ENCODE measurements at regions of chr1 and their contacts with region 1.

Region 1: DNA sequence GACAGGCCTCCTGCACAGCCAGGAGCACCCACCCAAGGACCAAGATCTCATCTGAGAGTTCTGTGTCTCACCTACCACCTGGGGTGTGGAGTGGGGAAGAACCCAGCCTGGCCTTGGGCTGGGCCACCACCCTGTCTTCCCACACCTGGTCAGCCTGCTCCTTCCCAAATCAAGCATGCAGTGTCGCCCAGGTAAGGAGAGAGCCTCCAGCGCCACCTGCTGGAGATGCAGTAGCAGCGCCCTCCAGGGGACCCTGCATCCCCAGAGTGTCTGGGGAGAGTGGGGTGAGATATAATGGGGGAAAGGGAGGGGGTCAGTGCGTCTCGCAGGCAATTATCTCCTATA is 32.3 kb downstream of the KIAA2013 start:
- DNase-seq: no peak
- ATAC-seq: peak; percentile 98
- H3K4me3 ChIP-seq: no peak overlapping the region
- H3K27ac ChIP-seq: no peak overlapping the region
- H3K4me1 ChIP-seq: no peaks in the 10 kb centered on the region
- H3K27me3 ChIP-seq: peaks cover 0 to 2% of the 10 kb centered on the region in 2 experiments; a peak in 2 of 4 replicates
- CTCF ChIP-seq: peak; percentile 95 to 99 (median 98)
- EP300 ChIP-seq: no peak
- POLR2A ChIP-seq: no peak
- RAD21 ChIP-seq: peak; percentile 91

Region 2: DNA sequence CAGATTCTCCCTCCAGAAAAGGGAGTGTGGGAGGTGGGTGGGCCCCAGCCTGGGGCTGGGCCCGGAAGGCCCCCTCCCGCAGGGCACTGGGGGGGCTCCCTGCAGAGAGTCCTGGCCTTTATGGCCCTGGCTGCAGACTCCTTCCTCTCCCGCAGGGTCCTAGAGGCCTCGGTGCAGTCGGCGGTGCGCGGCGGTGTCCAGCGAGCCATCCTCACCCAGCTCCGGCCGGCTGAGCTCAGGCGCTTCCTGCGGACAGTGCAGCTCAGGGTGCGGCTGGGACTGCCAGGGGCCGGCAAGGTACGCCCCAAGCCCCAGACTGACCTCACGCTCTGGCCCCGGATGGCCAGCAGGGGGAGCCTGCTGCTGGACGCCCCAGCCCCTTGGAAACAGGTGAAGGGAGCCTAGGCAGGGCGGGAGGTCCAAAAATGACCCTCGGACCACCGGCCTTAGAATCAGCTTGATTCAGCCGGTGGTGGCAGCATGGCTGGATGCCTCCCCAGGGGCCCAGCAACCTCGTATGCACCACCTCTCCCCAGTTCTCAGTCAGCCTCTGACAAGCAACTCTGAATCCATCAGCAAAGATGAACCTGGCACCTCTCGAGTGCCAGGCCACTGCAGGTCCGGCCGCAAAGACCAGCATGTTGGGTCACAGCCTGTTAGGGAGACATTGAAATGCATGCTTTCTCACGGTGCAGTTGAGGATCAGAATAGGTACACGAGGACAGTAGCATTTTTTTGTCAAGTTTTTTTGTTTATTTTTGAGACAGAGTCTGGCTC is 108.7 kb before region 1 on chr1:
- CTCF ChIA-PET with region 1: interaction called, 7 read pairs
- POLR2A ChIA-PET with region 1: no interaction called
- RAD21 ChIA-PET with region 1: interaction called, 3 read pairs
- SMC1A ChIA-PET with region 1: no interaction called
- in situ Hi-C with region 1: no loop called
- intact Hi-C with region 1: loop called (anchors 5 kb)
- DNase-seq: no peak
- ATAC-seq: peak; percentile 94
- H3K4me3 ChIP-seq: no peak overlapping the region
- H3K27ac ChIP-seq: no peak overlapping the region
- H3K4me1 ChIP-seq: peaks cover 4% of the 10 kb centered on the region; the same call in 1 of the 2 replicates
- H3K27me3 ChIP-seq: no peaks in the 10 kb centered on the region
- CTCF ChIP-seq: peak; percentile 79 to 96 (median 81)
- EP300 ChIP-seq: no peak
- POLR2A ChIP-seq: no peak
- RAD21 ChIP-seq: peak; percentile 43

Region 3: DNA sequence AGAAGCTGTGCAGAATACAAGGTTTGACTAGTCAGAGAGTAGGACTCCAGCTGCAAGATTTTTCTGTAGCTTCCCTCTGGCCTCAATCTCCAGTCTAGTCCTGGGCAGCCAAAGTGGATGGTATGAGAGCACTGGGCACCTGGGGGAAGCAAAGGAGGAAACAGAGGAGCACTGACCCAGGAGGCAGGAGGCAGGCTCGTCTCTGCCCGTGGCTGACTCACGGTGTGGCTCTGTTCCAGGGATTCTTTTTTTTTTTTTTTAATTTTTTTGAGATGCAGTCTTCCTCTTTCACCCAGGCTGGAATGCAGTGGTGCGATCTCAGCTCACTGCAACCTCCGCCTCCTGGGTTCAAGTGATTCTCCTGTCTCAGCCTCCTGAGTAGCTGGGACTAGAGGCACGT is 31.0 kb before region 1 on chr1:
- CTCF ChIA-PET with region 1: interaction called, 5 read pairs
- POLR2A ChIA-PET with region 1: no interaction called
- RAD21 ChIA-PET with region 1: no interaction called
- SMC1A ChIA-PET with region 1: interaction called, 3 read pairs
- in situ Hi-C with region 1: no loop called
- intact Hi-C with region 1: loop called (anchors 1 kb)
- DNase-seq: no peak
- ATAC-seq: no peak
- H3K4me3 ChIP-seq: no peak overlapping the region
- H3K27ac ChIP-seq: no peak overlapping the region
- H3K4me1 ChIP-seq: no peaks in the 10 kb centered on the region
- H3K27me3 ChIP-seq: peaks cover 5 to 9% of the 10 kb centered on the region in 2 experiments
- CTCF ChIP-seq: no peak
- EP300 ChIP-seq: no peak
- POLR2A ChIP-seq: no peak
- RAD21 ChIP-seq: no peak

Region 4: DNA sequence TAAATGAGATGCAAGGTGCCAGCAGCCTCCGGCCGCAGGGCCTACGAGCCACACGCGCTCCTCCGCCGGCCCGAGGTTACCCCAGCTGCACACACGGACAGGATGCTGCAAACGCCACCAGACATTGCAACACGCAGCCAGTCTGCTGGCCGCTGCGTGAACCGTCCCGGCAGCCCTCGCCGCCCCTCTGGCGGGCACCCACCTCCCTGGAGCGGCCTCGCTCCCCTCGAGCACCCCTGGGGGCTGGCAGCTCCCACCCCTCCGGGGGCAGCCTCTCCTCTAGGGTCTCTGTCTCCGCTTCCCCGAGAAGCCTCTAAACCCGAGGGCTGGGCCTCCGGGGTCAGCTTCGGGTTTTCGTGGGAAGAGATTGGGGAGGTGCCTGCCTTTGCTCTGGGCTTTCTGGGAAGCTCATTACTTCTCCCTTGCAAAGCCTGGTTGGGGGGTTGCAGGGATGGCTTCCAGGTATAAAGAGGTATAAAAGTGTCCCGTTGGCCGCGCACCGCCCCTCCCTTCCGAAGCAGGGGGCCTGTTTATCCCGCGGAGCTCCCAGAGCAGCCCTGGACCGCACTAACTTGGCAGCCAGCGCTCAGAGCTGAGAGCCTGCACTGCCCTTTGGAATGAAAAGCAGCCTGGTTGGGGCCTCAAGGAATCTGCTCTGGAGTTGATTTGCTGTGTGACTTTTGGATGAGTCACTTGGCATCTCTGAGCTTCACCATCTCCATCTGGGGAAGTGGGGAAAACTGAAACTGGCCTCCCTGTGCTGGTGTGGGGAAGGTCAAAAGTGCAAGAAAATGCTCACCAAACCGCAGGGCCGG is 702.3 kb after region 1 on chr1:
- CTCF ChIA-PET with region 1: no interaction called
- POLR2A ChIA-PET with region 1: no interaction called
- RAD21 ChIA-PET with region 1: no interaction called
- SMC1A ChIA-PET with region 1: no interaction called
- in situ Hi-C with region 1: no loop called
- intact Hi-C with region 1: no loop called
- DNase-seq: no peak
- ATAC-seq: peak; percentile 89
- H3K4me3 ChIP-seq: no peak overlapping the region
- H3K27ac ChIP-seq: no peak overlapping the region
- H3K4me1 ChIP-seq: no peaks in the 10 kb centered on the region
- H3K27me3 ChIP-seq: peaks cover 0 to 4% of the 10 kb centered on the region in 2 experiments; a peak in 3 of 4 replicates
- CTCF ChIP-seq: no peak
- EP300 ChIP-seq: no peak; a peak in 1 of 4 replicates
- POLR2A ChIP-seq: no peak
- RAD21 ChIP-seq: no peak